ENCODE measurements at regions of chr6 and their contacts with region 1.

Region 1: DNA sequence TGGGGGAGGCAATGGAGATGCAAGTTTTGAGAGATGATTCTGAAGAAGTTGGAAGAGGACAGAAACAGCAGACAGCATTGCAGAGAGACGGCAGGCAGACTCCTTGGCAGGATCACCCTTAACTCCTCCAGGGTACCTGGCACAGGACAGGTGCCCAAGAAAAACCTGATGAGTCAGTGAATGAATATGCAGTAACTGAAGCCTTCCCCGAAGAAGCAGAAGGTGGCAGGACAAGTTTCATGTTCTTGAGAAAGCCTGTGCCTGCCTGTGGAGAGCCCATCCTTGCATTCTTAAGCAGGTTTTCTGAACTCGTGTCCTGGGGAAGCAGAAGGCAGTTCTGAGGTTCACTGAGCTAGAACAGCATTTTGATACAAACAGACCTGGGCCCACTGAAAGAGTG is 79.6 kb upstream of the SASH1 start:
- DNase-seq: peak; percentile 82
- ATAC-seq: peak; percentile 78
- H3K4me3 ChIP-seq: no peak overlapping the region
- H3K27ac ChIP-seq: no peak overlapping the region
- H3K4me1 ChIP-seq: peaks cover 29% of the 10 kb centered on the region
- H3K27me3 ChIP-seq: no peaks in the 10 kb centered on the region
- CTCF ChIP-seq: no peak

Region 2: DNA sequence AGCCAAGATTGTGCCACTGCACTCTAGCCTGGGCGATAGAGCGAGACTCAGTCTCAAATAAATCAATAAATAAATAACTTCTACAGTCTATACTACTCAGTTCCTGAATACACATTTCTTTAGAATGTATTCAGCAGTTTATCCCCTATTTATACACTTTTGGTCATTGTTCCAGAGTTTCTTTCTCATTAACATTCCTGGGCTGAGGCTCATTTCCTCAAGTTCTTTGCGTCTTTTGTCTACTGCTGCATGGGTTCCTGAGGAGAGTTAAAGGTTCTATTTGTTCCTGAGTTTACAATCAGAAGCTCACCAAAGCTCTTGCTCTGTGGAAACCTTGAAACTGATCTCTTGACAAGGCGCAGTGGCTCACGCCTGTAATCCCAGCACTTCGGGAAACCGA is 42.0 kb after region 1 on chr6:
- CTCF ChIA-PET with region 1: no interaction called
- POLR2A ChIA-PET with region 1: no interaction called
- intact Hi-C with region 1: loop called (anchors 5 kb)
- DNase-seq: peak; percentile 81
- ATAC-seq: peak; percentile 74
- H3K4me3 ChIP-seq: no peak overlapping the region
- H3K27ac ChIP-seq: peak overlapping the region; percentile 71
- H3K4me1 ChIP-seq: peaks cover 22% of the 10 kb centered on the region
- H3K27me3 ChIP-seq: no peaks in the 10 kb centered on the region
- CTCF ChIP-seq: no peak

Region 3: GRCh38 chr6:148464319-148465010 is 201.5 kb after region 1 on chr6:
- CTCF ChIA-PET with region 1: no interaction called
- POLR2A ChIA-PET with region 1: no interaction called
- intact Hi-C with region 1: loop called (anchors 5 kb)
- DNase-seq: peak; percentile 79
- ATAC-seq: peak; percentile 70
- H3K4me3 ChIP-seq: no peak overlapping the region
- H3K27ac ChIP-seq: no peak overlapping the region
- H3K4me1 ChIP-seq: peaks cover 3% of the 10 kb centered on the region; the same call in 1 of the 2 replicates
- H3K27me3 ChIP-seq: no peaks in the 10 kb centered on the region
- CTCF ChIP-seq: peak; percentile 91